HCT116 (cell line): ENCODE measurements at regions of chr17 and their contacts with region 1.

Region 1: GRCh38 chr17:61412143-61412859 is 12.7 kb downstream of the TBX2 start:
- DNase-seq: peak; percentile 49
- ATAC-seq: peak; percentile 62
- H3K4me3 ChIP-seq: peak overlapping the region; percentile 54 to 64
- H3K27ac ChIP-seq: peak overlapping the region; percentile 97
- H3K4me1 ChIP-seq: peaks cover 58 to 70% of the 10 kb centered on the region in 2 experiments
- H3K27me3 ChIP-seq: no peaks in the 10 kb centered on the region
- CTCF ChIP-seq: peak; percentile 94 to 100 (median 99)
- POLR2A ChIP-seq: no peak
- RAD21 ChIP-seq: peak; percentile 100

Region 2: GRCh38 chr17:60971515-60972369 is 440.6 kb before region 1 on chr17:
- CTCF ChIA-PET with region 1: interaction called, 32 read pairs
- POLR2A ChIA-PET with region 1: no interaction called
- RAD21 ChIA-PET with region 1: interaction called, 3 to 4 read pairs
- intact Hi-C with region 1: loop called (anchors 2 kb)
- DNase-seq: peak; percentile 51
- ATAC-seq: peak; percentile 98
- H3K4me3 ChIP-seq: no peak overlapping the region
- H3K27ac ChIP-seq: no peak overlapping the region
- H3K4me1 ChIP-seq: no peaks in the 10 kb centered on the region
- H3K27me3 ChIP-seq: no peaks in the 10 kb centered on the region
- CTCF ChIP-seq: peak; percentile 80 to 94 (median 81); a peak in 5 of 6 replicates
- POLR2A ChIP-seq: no peak
- RAD21 ChIP-seq: peak; percentile 88

Region 3: DNA sequence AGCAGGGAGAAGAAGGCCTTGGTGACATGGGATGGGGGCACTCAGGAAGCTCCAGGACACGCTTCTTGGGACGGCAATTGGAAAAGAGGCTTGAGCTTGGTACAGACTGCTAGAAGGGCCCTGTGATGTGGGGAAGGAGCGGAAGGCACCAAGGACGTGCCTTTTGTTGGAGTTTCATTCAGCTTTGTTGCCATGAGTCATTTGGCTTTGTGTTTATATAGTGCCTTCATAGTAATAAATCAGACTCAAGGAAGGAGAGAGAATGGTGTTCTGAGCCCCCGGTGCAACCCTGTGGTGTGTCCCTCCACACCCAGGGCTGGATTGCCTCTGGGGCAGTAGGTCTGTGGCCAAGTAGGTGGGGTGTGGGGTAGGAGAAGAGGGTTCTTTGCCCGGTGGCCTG is 32.5 kb after region 1 on chr17:
- CTCF ChIA-PET with region 1: no interaction called
- POLR2A ChIA-PET with region 1: no interaction called
- RAD21 ChIA-PET with region 1: no interaction called
- intact Hi-C with region 1: no loop called
- DNase-seq: no peak
- ATAC-seq: no peak
- H3K4me3 ChIP-seq: no peak overlapping the region
- H3K27ac ChIP-seq: no peak overlapping the region
- H3K4me1 ChIP-seq: peaks cover 0 to 8% of the 10 kb centered on the region in 2 experiments; a peak in 2 of 4 replicates
- H3K27me3 ChIP-seq: no peaks in the 10 kb centered on the region
- CTCF ChIP-seq: no peak
- POLR2A ChIP-seq: no peak
- RAD21 ChIP-seq: no peak

Region 4: DNA sequence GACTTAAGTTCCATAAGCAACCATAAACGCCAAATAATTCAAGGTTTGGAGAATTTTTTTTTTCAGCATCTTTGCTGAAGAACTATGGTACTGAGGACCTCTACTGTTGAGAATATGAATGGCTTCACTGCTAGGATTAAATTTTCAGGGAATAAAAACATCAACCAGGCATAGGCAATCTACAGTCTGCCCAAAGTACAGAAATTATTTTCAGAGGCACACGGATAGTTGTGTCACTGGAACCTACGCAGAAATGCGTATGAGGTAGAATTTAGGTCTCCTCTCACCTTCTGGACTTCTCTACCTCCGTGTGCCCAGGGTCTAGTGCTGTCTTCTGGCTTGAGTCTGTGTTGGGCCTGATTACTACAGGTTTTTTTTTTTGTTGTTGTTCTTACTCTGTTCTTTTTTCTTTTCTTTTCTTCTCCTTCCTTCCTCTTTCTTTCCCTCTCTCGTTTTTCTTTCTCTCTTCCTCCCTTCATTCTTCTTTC is 139.0 kb after region 1 on chr17:
- CTCF ChIA-PET with region 1: interaction called, 14 read pairs
- POLR2A ChIA-PET with region 1: no interaction called
- RAD21 ChIA-PET with region 1: interaction called in 1 of 2 experiments, 4 read pairs
- intact Hi-C with region 1: loop called (anchors 1 kb)
- DNase-seq: peak; percentile 59
- ATAC-seq: peak; percentile 91
- H3K4me3 ChIP-seq: no peak overlapping the region
- H3K27ac ChIP-seq: peak overlapping the region; percentile 63
- H3K4me1 ChIP-seq: peaks cover 27 to 30% of the 10 kb centered on the region in 2 experiments
- H3K27me3 ChIP-seq: no peaks in the 10 kb centered on the region
- CTCF ChIP-seq: peak; percentile 82 to 95 (median 94)
- POLR2A ChIP-seq: no peak
- RAD21 ChIP-seq: peak; percentile 97

Region 5: DNA sequence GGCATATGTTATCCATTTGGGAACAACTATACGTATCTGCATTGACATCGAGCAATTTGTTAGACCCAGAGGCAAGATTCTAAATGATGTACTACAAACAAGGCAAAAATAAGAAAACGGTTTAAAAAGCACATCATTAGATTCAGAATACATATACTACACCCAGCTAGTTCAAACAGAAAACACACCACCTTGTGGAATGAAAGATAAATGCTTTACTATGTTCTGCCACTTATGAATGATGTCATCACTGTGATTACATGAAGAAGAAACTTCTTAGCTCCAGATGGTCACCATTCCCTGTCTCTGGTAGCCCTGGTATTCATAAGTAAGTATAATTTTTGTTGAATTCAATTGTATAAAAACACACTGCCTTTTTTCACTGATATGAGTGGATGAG is 170.9 kb after region 1 on chr17:
- CTCF ChIA-PET with region 1: interaction called, 34 read pairs
- POLR2A ChIA-PET with region 1: no interaction called
- RAD21 ChIA-PET with region 1: interaction called, 3 to 6 read pairs
- intact Hi-C with region 1: loop called (anchors 1 kb)
- DNase-seq: peak; percentile 65
- ATAC-seq: peak; percentile 97
- H3K4me3 ChIP-seq: no peak overlapping the region
- H3K27ac ChIP-seq: peak overlapping the region; percentile 38; the same call in 1 of the 2 replicates
- H3K4me1 ChIP-seq: peaks cover 9 to 24% of the 10 kb centered on the region in 2 experiments
- H3K27me3 ChIP-seq: no peaks in the 10 kb centered on the region
- CTCF ChIP-seq: peak; percentile 44 to 74 (median 74); a peak in 5 of 6 replicates
- POLR2A ChIP-seq: no peak
- RAD21 ChIP-seq: peak; percentile 72

Region 6: DNA sequence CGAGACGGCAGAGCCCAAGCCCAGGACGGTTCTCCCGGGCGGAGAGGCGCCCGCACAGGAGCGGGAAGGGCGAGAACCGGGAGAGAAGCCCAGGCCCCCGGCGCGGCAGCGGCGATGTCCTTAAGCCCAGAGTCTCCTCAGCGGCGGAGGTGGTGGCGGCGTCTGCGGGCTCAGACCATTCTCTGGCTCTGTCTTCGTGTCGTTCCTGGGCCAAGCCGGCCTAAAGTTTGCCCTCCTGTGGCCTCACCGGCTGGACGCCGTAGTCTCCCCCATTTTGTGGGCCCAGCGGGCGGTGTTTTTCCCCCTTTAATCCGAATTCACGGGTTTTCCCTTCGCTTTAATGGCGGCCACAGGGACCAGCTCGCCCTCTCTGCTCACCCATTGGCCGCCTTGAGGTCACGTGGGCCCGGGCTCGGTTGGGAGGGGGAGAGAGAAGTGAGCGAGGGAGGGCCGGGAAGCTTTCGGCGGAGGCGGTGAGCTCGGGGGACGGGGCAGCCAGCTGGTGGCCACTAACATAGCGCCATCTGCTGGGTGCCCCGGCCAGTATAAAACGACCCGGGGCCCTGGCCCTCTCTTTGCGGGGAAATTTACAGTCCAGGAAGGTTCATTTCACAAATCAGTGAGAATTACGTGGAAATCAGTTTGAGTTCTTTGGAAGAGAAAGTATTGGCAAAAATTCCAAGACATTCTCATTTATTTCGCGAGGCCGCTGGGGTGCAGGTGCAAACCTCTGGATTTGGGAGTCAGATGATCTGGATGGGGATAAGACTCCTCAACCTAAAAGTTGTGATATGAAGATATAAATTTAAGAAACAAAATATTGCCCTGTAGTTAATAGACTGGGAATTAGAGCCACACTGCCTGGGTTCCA is 653.5 kb after region 1 on chr17:
- CTCF ChIA-PET with region 1: interaction called, 6 read pairs
- POLR2A ChIA-PET with region 1: no interaction called
- RAD21 ChIA-PET with region 1: no interaction called
- intact Hi-C with region 1: loop called (anchors 5 kb)
- DNase-seq: peak; percentile 96
- ATAC-seq: peak; percentile 94
- H3K4me3 ChIP-seq: peak overlapping the region; percentile 89 to 95
- H3K27ac ChIP-seq: peak overlapping the region; percentile 95
- H3K4me1 ChIP-seq: peaks cover 7 to 20% of the 10 kb centered on the region in 2 experiments
- H3K27me3 ChIP-seq: no peaks in the 10 kb centered on the region
- CTCF ChIP-seq: peak; percentile 84 to 99 (median 98)
- POLR2A ChIP-seq: peak; percentile 69
- RAD21 ChIP-seq: peak; percentile 87